ENCODE measurements at regions of chr5 and their contacts with region 1.

Region 1: DNA sequence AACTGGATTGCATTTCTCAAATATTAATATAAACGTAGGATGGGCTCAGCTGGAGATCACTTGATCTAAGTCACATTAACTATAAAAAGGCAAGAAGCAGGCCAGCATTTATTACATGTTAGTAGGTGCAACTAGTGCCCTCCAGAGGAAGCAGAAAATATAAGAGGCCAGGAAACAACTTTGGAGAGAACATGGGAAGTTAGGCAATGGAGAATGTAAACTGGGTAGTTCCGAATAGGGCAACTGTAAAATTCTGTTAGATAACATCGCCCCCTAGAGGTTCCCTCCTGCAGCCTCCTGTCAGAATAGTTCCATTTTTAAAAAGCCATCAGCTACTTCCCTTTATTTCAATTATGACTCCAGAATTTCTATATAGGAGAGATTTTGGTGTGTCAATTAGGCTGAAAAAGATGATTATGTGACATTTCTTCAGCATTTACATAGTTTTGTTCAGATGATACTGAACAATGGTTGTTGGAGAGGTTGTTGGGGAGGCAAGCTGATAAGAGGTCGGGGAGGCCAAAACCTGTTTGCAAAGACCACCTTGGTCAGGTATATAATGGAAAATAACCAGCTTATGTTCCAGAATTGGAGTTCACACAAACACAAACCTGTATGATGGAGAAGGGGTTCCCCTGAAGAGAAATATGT is 22.4 kb downstream of the CCL28 start:
- DNase-seq: peak; percentile 39
- ATAC-seq: peak; percentile 98
- H3K4me3 Mint-ChIP-seq: no peak overlapping the region
- H3K27ac Mint-ChIP-seq: no peak overlapping the region
- H3K4me1 Mint-ChIP-seq: no peaks in the 10 kb centered on the region
- H3K27me3 Mint-ChIP-seq: no peaks in the 10 kb centered on the region; the same call in 1 of the 2 replicates
- CTCF ChIP-seq: peak; percentile 72

Region 2: DNA sequence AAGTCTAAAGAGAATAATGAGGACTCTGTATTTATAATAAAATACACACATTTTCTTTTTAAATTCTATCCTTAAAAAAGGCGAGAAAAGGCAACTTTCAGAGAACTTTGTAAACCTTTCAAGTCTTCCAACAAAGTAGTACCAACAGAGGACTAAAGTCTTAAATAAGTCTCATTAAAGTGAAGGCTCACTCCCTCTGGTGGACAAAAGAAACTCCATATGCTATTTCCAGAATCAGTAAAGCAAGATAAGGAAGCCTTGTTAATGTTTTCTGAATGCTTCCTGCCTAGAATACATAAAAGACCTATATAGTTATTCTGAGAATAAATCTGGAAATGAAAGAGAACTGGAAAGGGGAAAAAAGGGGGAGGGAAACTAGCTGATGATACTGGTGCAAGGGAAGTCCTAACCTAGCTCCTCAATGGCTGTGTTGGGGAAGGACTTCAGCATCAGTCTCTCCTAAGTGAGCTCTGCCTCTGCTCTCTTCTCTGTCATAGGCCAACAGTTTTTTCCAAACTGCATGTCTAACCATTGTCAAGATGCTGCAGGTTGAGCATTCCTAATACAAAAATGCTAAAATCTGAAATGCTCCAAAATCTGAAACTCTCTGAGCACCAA is 83.7 kb before region 1 on chr5:
- CTCF ChIA-PET with region 1: interaction called, 12 read pairs
- POLR2A ChIA-PET with region 1: no interaction called
- DNase-seq: no peak
- ATAC-seq: peak; percentile 50
- H3K4me3 Mint-ChIP-seq: no peak overlapping the region
- H3K27ac Mint-ChIP-seq: 0 out of 2 replicates have a peak overlapping the region, but pooled peaks have one; percentile 22
- H3K4me1 Mint-ChIP-seq: peaks cover 79% of the 10 kb centered on the region
- H3K27me3 Mint-ChIP-seq: no peaks in the 10 kb centered on the region
- CTCF ChIP-seq: peak; percentile 41; the same call in 1 of the 2 replicates

Region 3: DNA sequence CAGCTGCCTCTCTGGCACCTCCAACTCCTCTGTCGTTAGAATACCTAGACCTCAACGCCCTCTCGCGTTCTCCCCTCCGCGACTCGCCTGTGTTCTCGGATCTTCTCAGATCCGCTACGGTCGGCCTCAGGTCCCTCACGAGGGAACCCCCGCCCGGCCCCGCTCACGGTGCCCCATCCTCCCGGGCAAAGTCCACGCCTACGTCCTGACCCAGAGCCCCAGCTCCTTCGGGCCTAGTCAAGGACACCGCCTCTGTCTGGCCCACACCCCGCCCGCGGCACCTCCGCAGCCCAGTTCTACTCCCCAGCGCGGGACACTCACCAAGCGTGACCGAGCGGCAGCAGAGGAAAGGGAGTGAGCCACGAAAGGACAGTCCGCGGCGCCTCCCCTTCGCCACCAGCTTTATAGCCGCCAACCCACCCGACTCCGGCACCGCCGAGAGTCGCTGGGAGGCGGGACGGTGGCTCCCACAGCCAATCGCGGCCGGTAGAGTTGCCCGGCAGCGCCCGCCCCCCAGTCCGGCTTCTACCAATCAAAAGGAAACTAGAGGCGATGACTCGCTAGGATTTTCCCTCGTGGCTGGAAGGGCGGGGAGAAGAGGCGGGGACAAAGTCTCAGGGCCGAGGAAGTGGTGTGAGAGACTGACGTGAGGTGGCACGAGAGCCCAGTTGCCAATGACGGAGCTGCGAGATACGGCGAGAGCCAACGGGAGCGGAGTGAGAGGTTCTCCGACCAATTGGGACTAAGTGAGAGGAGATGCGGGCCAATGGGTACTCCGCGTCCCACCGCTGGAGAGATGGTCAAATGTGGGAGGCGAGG is 76.6 kb before region 1 on chr5 and contains the start of gene HMGCS1:
- CTCF ChIA-PET with region 1: interaction called, 24 read pairs
- POLR2A ChIA-PET with region 1: no interaction called
- DNase-seq: peak; percentile 98
- ATAC-seq: peak; percentile 97
- H3K4me3 Mint-ChIP-seq: peak within 1 kb of the TSS; percentile 94
- H3K27ac Mint-ChIP-seq: peak within 1 kb of the TSS; percentile 99
- H3K4me1 Mint-ChIP-seq: peaks cover 52% of the 10 kb centered on the region
- H3K27me3 Mint-ChIP-seq: peaks cover 3% of the 10 kb centered on the region; the same call in 1 of the 2 replicates
- CTCF ChIP-seq: no peak
- total RNA-seq, gene HMGCS1: 176 to 199 TPM (median 178 TPM) in 3 replicates

Region 4: DNA sequence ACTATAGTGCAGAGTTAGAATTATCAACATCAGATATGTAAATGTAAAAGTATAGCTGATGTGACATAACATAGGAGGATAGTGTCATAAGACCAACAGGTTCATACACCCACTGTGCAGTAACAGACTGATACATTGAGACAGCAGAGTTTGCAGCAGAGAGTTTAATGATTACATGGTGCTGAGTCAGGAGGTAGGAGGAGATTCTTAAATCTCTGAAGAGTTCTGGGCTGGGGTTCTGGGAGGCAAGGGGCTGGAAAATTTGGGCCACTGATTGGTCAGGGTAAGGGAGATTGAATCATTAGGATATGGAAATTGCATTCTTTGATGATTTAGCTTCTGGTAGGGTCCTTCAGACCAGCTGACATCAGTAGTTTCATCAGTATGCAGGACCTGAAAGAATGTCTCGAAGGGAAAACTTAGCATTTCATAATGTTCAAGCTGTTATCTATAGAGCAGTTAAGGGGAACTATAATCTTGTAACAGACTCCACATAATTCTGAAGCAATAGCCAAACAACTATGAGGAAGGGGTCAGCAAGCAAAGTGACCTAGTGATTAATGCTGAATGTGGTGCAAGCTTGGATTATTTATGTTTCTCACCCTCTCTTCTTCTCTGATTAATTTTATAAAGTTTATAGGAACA is 13.2 kb before region 1 on chr5:
- CTCF ChIA-PET with region 1: no interaction called
- POLR2A ChIA-PET with region 1: no interaction called
- DNase-seq: no peak
- ATAC-seq: no peak
- H3K4me3 Mint-ChIP-seq: no peak overlapping the region
- H3K27ac Mint-ChIP-seq: no peak overlapping the region
- H3K4me1 Mint-ChIP-seq: no peaks in the 10 kb centered on the region
- H3K27me3 Mint-ChIP-seq: peaks cover 4% of the 10 kb centered on the region; the same call in 1 of the 2 replicates
- CTCF ChIP-seq: no peak

Region 5: GRCh38 chr5:43453606-43454005 is 63.8 kb after region 1 on chr5:
- CTCF ChIA-PET with region 1: no interaction called
- POLR2A ChIA-PET with region 1: no interaction called
- DNase-seq: no peak
- ATAC-seq: no peak
- H3K4me3 Mint-ChIP-seq: no peak overlapping the region
- H3K27ac Mint-ChIP-seq: no peak overlapping the region
- H3K4me1 Mint-ChIP-seq: no peaks in the 10 kb centered on the region
- H3K27me3 Mint-ChIP-seq: no peaks in the 10 kb centered on the region
- CTCF ChIP-seq: no peak

Measured in WTC11 (cell line).